ENCODE measurements at regions of chr16 and their contacts with region 1.

Region 1: DNA sequence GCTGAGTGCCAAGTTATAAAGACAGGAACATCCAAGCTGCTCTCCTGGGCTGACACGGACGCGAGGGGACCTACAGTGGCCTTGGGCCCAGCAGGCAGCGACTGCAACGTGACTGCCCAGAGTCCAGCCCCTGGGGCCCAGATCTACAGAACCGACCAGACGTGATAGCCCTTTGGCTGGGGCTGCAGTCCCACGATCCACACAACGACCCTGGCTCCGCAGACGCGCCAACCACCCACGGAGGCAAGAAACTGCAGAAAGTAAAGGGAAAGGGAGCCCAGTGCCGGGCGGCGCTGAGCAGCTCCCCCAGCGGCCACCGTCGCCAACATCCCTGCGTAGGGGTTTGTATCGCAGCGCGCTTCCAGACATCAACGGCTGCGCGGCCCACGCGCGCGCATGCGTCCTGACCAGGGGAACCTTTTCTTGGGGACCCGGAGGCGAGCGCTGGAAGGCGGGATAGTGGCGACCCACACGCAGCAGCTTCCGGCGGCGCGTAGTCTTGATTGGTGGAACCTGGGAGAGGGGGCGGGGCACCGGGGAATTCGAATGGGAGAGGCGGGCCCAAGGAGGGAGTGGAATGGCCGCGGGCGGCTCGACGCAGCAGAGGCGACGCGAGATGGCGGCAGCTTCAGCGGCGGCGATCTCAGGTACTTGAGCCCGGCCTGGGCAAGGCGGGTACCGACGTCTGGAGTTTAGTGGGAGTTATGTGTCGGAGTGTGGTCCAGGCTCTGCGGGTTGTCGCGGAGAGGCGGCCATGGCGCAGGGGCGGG is at the start of gene KIF22:
- DNase-seq: peak; percentile 98 to 100 (median 100)
- ATAC-seq: peak; percentile 92 to 94
- H3K4me3 Mint-ChIP-seq: peak within 1 kb of the TSS; percentile 95 to 99 (median 98)
- H3K27ac Mint-ChIP-seq: peak within 1 kb of the TSS; percentile 98 to 99 (median 99)
- H3K4me1 Mint-ChIP-seq: peaks cover 22 to 58% (median 52%) of the 10 kb centered on the region in 4 donors
- H3K27me3 Mint-ChIP-seq: no peaks in the 10 kb centered on the region
- polyA plus RNA-seq, gene KIF22: 36.9 to 45.4 (median 39.6) TPM

Region 2: GRCh38 chr16:29653471-29653870 is 136.9 kb before region 1 on chr16:
- POLR2A ChIA-PET with region 1: no interaction called
- DNase-seq: no peak
- ATAC-seq: no peak
- H3K4me3 Mint-ChIP-seq: peak overlapping the region in 1 of 10 donors; percentile 24
- H3K27ac Mint-ChIP-seq: peak overlapping the region in 1 of 10 donors; percentile 69
- H3K4me1 Mint-ChIP-seq: peaks cover 10 to 25% (median 13%) of the 10 kb centered on the region in 4 donors
- H3K27me3 Mint-ChIP-seq: no peaks in the 10 kb centered on the region

Region 3: GRCh38 chr16:29729116-29729521 is 61.2 kb before region 1 on chr16:
- POLR2A ChIA-PET with region 1: interaction called, 25 read pairs
- DNase-seq: no peak
- ATAC-seq: peak in 1 of 2 donors; percentile 33
- H3K4me3 Mint-ChIP-seq: no peak overlapping the region
- H3K27ac Mint-ChIP-seq: peak overlapping the region in 4 of 10 donors; percentile 40 to 72 (median 49)
- H3K4me1 Mint-ChIP-seq: peaks cover 14 to 38% (median 32%) of the 10 kb centered on the region in 4 donors
- H3K27me3 Mint-ChIP-seq: no peaks in the 10 kb centered on the region

Region 4: GRCh38 chr16:29738514-29738913 is 51.9 kb before region 1 on chr16:
- POLR2A ChIA-PET with region 1: interaction called, 223 read pairs
- DNase-seq: peak; percentile 25 to 83 (median 72)
- ATAC-seq: peak; percentile 79 to 86
- H3K4me3 Mint-ChIP-seq: peak overlapping the region; percentile 36 to 80 (median 66)
- H3K27ac Mint-ChIP-seq: peak overlapping the region; percentile 82 to 100 (median 95)
- H3K4me1 Mint-ChIP-seq: peaks cover 58 to 88% (median 85%) of the 10 kb centered on the region in 4 donors
- H3K27me3 Mint-ChIP-seq: no peaks in the 10 kb centered on the region

Region 5: DNA sequence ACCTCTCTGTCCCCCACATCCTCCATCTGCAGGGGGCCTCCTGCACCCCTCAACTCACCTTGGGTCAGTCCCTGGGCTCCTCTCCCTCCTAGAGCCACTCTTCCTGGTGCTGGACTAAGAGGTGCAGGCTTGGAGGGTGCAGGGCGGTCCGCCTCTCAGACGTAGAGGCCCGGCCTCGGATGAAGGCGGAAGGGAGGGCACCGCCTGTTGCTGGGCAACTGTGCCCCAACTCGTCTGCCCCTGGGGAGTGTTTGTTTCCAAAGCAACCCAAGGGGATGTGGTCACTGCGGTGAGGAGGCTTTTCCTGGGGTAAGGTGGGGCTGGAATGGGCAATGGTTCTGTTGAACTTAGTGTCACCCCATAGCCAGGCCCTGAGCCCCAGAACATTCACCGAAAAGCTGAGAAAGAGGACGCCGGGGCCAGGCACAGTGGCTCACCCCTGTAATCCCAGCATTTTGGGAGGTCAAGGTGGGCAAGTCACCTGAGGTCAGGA is 44.5 kb before region 1 on chr16 and contains the start of gene C16orf54:
- POLR2A ChIA-PET with region 1: interaction called, 223 read pairs
- DNase-seq: peak; percentile 81 to 100 (median 98)
- ATAC-seq: peak; percentile 71 to 83
- H3K4me3 Mint-ChIP-seq: peak within 1 kb of the TSS; percentile 96 to 100 (median 99)
- H3K27ac Mint-ChIP-seq: peak within 1 kb of the TSS; percentile 82 to 100 (median 100)
- H3K4me1 Mint-ChIP-seq: peaks cover 34 to 76% (median 67%) of the 10 kb centered on the region in 4 donors
- H3K27me3 Mint-ChIP-seq: peaks cover 0 to 4% (median 0%) of the 10 kb centered on the region in 5 donors
- polyA plus RNA-seq, gene C16orf54: 20.7 to 32.7 (median 29.2) TPM

Region 6: DNA sequence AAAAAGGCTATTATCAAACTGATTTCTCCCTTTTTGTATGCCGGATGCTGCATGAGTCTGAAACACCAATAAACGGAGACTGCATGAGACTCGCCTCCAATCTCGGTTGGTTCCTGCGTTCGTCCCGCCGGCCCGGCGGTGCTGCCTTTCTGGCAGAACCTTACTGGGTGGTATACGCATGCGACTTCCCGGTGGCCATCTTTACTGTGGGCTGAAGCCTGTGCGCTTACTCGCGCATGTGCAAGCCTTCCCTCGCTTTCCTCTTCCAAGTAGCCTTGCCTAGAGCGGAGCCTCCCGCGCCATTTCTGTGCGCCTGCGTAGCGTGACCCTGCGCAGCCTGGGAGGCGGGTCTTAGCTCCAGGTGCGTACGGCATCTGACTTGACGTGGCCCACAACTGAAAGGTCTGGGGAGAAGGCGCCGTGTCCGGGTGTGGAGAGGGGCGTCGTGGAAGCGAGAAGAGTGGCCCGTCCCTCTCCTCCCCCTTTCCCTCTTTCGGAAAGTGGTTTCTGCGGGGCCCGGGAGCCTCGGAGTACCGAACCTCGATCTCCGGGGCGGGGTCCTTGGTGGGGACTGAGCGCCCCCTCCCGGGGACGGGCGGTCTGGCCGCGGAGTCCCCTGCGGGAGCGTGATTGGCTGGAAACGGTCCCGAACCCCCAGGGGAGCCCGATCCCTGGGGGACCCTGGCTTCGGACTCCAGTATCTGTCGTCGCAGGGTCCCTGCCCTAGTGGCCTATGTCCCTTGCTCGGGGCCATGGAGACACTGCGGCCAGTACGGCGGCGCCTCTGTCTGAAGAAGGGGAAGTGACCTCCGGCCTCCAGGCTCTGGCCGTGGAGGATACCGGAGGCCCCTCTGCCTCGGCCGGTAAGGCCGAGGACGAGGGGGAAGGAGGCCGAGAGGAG is 25.7 kb after region 1 on chr16 and contains the start of gene PAGR1:
- POLR2A ChIA-PET with region 1: interaction called, 34 read pairs
- DNase-seq: peak; percentile 91 to 100 (median 99)
- ATAC-seq: peak; percentile 71 to 80
- H3K4me3 Mint-ChIP-seq: peak within 1 kb of the TSS; percentile 93 to 100 (median 96)
- H3K27ac Mint-ChIP-seq: peak within 1 kb of the TSS; percentile 93 to 100 (median 98)
- H3K4me1 Mint-ChIP-seq: peaks cover 44 to 93% (median 70%) of the 10 kb centered on the region in 4 donors
- H3K27me3 Mint-ChIP-seq: peaks cover 0 to 1% (median 0%) of the 10 kb centered on the region in 5 donors
- polyA plus RNA-seq, gene PAGR1: 51.4 to 57.5 (median 55.5) TPM

Region 7: DNA sequence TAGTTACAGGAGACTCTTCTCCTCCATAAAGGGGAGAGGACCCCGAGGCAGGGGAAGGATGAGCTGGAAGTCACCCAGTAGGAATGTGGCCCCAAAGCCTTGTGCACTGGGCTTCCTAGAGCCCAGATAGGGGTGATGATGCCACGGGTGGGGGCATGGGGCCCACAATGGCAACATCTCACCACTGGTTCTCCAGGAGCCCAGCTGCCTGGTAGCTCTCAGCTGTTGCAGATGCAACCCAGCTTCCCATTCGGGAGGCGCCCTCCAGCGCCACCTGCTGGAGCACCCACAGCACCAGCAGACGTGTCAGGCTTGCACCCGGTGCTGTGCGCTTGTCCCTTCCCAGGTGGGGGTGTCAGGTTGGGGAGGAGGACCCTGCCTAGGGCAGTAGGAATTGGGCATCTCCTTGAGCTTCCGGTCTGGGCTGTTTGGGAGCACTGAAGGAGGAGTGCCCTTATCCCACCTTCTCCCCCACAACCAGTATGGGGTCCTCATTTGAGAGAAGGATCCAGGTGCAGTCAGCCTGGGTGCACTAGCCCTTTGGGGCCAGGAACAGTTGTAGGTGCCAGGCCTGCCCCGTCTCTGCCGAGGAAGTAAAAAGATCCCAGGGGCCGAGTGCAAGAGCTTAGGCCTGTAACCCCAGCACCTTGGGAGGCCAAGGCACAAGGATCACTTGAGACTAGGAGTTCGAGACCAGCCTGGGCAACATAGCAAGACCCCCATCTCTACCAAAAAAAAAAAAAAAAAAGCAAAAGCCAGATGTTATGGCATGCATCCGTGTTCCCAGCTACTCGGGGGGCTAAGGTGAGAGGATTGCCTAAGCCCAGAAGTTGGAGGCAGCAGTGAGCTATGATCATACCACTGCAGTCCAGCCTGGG is 58.3 kb after region 1 on chr16:
- POLR2A ChIA-PET with region 1: interaction called, 29 read pairs
- DNase-seq: peak; percentile 64 to 90 (median 80)
- ATAC-seq: peak; percentile 96 to 98
- H3K4me3 Mint-ChIP-seq: peak overlapping the region in 1 of 10 donors; percentile 19
- H3K27ac Mint-ChIP-seq: peak overlapping the region; percentile 40 to 88 (median 68)
- H3K4me1 Mint-ChIP-seq: peaks cover 6 to 12% (median 8%) of the 10 kb centered on the region in 4 donors
- H3K27me3 Mint-ChIP-seq: no peaks in the 10 kb centered on the region

Region 8: DNA sequence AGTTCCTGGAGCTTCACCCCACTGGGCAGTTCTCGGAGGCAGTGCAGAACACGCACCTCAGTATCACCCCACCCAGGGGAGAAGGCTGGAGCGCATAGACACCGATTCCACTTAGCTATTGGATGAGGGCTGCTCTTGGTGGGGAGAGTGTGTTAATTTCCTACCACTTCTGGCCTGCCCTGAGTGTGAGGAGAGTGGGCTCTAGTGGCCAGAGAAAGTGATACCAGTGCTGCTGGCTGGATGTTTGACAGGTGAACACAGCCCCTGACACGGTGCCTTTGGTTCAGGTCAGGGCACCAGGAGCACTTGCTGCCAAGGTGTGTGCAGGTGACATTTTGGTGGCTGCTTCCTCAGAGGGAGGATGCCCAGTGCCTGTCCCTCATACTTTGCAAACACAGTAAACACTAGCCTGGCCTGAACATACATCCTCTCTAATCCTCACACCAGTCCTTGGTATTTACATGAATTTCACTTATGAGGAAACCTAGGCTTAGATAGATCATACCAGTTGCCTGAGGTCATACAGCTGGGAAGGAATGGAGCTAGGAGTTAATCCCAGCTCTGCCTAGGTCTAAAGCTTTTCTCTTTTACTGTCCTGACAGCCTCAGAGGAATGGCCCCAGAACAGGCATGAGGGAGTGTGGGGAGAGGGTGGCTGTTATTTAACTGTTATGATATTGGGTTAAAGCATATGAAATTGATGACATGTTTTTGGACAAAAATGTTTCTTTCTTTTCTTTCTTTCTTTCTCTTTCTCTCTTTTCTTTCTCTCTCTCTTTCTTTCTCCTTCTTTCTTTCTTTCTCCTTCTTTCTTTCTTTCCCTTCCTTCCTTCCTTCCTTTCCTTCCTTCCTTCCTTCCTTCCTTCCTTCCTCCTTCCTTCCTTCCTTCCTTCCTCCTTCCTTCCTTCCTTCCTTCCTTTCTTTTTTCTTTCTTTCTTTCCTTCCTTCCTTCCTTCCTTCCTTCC is 1543.6 kb after region 1 on chr16:
- POLR2A ChIA-PET with region 1: no interaction called
- DNase-seq: peak in 8 of 10 donors; percentile 27 to 74 (median 40)
- ATAC-seq: peak; percentile 78 to 83
- H3K4me3 Mint-ChIP-seq: peak overlapping the region in 1 of 10 donors; percentile 38
- H3K27ac Mint-ChIP-seq: peak overlapping the region in 9 of 10 donors; percentile 28 to 83 (median 66)
- H3K4me1 Mint-ChIP-seq: peaks cover 25 to 61% (median 49%) of the 10 kb centered on the region in 4 donors
- H3K27me3 Mint-ChIP-seq: no peaks in the 10 kb centered on the region